Thyroid gland (tissue), 4 donors: ENCODE measurements at regions of chrX and their contacts with region 1.

Region 1: GRCh38 chrX:15674841-15675489 is 10.4 kb upstream of the CLTRN start:
- DNase-seq: peak; percentile 93 to 94
- H3K4me3 ChIP-seq: peak overlapping the region; percentile 62 to 82 (median 78)
- H3K27ac ChIP-seq: peak overlapping the region; percentile 91 to 97 (median 97)
- H3K4me1 ChIP-seq: peaks cover 13 to 15% of the 10 kb centered on the region in 2 donors
- H3K27me3 ChIP-seq: no peaks in the 10 kb centered on the region
- CTCF ChIP-seq: no peak
- POLR2A ChIP-seq: peak in 1 of 2 donors; percentile 72

Region 2: DNA sequence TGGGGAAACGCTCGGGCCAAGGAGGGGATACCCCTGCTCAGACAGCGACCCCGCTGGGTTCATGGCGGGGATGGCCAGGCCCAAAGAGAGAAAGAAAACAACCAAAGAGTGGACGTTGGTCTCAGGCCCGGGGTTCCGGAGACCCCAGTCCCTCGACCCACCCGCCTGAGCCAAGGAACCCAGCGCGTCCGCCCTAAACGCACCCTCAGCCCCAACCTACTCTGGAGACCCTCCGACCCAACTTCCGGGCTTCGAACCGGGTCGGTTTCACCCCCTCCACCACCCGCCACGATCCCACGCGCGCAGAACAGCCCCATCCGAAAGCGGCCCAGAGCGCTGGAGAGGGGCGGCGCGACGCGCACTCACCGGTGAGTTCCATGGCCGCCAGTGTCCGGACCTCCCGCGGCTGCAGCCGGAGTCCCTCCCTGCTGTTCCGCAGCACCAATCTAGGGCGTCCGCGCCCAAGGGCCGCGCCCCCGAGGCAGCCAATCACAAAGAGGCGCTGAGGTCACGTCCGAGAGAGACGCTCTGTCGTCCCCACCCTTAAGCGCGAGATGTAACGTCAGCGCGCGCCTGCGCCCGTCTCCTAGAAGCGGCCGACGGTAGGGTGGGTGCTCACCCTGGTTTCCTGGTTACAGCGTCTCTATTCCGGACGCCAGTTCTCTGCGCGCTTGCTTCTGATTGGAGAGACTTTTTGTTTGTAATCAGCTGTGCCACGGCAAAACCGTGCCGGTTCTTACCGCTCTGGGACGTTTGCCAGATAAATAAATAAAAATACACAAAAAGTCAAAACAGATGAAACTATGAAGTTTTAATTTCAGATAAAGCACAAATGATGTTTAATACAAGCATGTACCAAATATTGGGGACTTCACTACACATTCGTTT is 339.6 kb before region 1 on chrX and contains the start of gene PIGA:
- intact Hi-C with region 1: loop called (anchors 10 kb)
- DNase-seq: peak; percentile 94 to 96
- H3K4me3 ChIP-seq: peak within 1 kb of the TSS in 2 of 3 donors; percentile 49 to 75
- H3K27ac ChIP-seq: peak within 1 kb of the TSS; percentile 66 to 85 (median 72)
- H3K4me1 ChIP-seq: peaks cover 0 to 4% of the 10 kb centered on the region in 2 donors
- H3K27me3 ChIP-seq: no peaks in the 10 kb centered on the region
- CTCF ChIP-seq: no peak
- POLR2A ChIP-seq: peak in 1 of 2 donors; percentile 91
- total RNA-seq, gene PIGA: 12.1 to 27.2 (median 15.4) TPM

Region 3: DNA sequence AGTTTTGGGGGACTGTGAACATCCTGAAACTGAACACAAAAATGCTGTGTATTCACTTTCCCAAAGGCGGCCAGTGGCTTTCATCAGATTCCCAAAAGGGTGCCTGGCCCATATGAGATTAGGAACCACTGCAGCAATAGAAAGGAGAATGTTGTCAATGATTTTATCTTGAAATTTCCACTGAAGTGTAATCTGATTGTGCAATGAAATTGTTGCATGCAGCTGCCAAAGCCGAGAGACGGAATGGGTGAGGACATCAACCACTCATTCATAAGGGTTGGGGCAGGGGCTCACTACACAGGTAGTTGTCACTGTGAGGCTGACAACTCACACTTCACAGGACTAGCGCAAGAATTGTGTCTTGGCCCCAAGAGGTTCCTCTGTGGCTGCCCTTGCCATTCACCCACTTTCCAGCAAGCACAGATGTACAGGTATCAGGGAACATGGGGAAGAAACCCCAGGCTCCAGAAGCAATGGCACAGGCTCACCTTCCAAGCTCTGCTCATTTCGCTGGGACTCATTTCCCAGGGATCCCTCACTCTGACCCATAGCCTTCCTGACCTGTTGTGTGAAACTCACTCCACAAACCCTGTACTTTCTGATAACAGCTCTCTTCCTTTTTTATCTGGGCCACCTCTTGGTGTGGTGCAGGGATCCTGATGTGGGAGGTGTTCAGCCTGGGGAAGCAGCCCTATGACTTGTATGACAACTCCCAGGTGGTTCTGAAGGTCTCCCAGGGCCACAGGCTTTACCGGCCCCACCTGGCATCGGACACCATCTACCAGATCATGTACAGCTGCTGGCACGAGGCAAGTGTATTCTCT is 125.6 kb before region 1 on chrX:
- intact Hi-C with region 1: no loop called
- DNase-seq: peak; percentile 10 to 22
- H3K4me3 ChIP-seq: no peak overlapping the region
- H3K27ac ChIP-seq: no peak overlapping the region
- H3K4me1 ChIP-seq: peaks cover 0 to 12% of the 10 kb centered on the region in 2 donors
- H3K27me3 ChIP-seq: no peaks in the 10 kb centered on the region
- CTCF ChIP-seq: no peak
- POLR2A ChIP-seq: no peak

Region 4: DNA sequence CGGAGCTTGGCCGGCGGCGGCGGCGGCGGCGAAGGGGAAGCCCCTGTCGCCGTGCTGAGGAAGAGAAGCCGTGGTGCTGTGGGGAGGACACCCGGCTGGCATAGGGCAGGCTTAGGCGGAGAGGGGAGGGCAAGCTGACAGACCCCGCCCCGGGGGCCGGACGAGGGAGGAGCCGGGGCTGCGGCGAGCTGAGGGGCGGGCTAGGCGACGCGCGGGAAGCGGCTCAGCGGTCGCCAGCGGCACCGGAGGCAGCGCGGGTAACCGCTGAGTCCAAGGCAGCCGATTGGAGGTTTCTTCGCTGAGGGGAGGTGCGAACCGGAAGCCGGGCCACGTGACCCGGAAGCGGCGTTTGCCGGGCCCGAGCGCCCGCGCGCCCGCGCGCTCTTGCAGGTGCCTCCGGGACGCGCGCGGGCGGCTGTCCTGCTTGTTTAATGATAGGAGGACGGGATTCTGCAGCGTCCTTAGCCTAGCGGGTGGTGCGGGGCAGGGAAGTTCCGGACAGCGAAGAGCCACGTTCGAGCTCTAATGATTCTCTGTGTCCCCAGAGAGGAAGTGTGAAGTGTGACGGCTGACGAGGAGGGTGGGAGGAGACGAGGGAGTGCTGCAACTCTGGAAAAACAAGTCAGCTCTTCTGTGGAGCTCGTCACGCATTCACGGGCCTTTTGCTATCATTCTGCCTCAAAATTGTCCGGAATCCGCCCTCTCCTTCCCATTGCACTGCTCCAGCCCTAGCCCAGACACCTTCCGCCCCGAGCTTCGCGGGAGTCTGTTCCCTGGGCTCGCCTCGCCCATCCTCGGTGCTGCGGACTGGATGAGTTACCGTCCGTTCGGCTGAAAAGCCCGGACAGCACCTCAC is 180.0 kb after region 1 on chrX and contains the start of gene AP1S2:
- intact Hi-C with region 1: loop called (anchors 10 kb)
- DNase-seq: peak; percentile 89 to 90
- H3K4me3 ChIP-seq: peak within 1 kb of the TSS in 2 of 3 donors; percentile 58 to 79
- H3K27ac ChIP-seq: peak within 1 kb of the TSS; percentile 75 to 82 (median 80)
- H3K4me1 ChIP-seq: peaks cover 0 to 16% of the 10 kb centered on the region in 2 donors
- H3K27me3 ChIP-seq: no peaks in the 10 kb centered on the region
- CTCF ChIP-seq: no peak
- POLR2A ChIP-seq: peak in 1 of 2 donors; percentile 84
- total RNA-seq, gene AP1S2: 34.3 to 81.4 (median 45.7) TPM

Region 5: GRCh38 chrX:15947648-15948317 is 272.8 kb after region 1 on chrX:
- intact Hi-C with region 1: no loop called
- DNase-seq: no peak
- H3K4me3 ChIP-seq: no peak overlapping the region
- H3K27ac ChIP-seq: no peak overlapping the region
- H3K4me1 ChIP-seq: no peaks in the 10 kb centered on the region
- H3K27me3 ChIP-seq: no peaks in the 10 kb centered on the region
- CTCF ChIP-seq: no peak
- POLR2A ChIP-seq: no peak